Mammary epithelial cell (primary cell): ENCODE measurements at regions of chr14 and their contacts with region 1.

Region 1: GRCh38 chr14:92846162-92846897 is 52.2 kb downstream of the GOLGA5 start:
- DNase-seq: peak; percentile 84
- H3K4me3 ChIP-seq: no peak overlapping the region
- H3K27ac ChIP-seq: no peak overlapping the region
- H3K4me1 ChIP-seq: peaks cover 6% of the 10 kb centered on the region
- H3K27me3 ChIP-seq: no peaks in the 10 kb centered on the region
- CTCF ChIP-seq: no peak

Region 2: DNA sequence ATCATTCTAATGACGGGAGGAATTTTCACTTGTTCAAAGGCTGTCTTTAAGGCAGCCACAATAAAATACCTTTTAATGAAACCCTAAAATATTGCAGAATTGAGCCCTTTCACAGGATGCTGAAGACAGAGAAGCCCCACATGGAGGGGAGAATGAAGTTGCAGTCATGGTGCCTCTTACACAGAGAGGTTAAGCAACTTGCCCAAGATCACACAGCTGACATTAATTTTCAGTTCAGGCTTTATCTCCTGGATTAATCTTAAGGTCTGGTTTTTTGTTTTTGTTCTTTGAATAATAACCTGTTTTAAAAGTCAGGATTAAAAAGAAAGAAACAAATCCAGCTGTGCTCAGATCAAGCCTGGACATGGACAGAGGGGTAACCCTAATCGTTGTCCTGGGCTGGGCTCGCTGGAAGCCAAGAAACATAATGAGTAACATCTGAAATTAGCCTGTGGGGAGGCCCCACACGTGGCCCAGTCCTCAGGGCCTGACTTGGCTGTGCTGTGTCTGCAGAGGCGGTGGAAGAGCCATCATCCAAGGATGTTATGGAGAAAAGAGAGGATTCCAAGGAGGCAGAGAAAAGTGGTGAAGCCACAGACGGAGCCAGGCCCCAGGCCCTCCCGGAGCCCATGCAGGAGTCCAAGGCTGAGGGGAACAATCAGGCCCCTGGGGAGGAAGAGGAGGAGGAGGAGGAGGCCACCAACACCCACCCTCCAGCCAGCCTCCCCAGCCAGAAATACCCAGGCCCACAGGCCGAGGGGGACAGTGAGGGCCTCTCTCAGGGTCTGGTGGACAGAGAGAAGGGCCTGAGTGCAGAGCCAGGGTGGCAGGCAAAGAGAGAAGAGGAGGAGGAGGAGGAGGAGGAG is 84.6 kb after region 1 on chr14:
- CTCF ChIA-PET with region 1: no interaction called
- dilution Hi-C with region 1: loop called (anchors 5 kb)
- in situ Hi-C with region 1: no loop called
- intact Hi-C with region 1: no loop called
- DNase-seq: peak; percentile 75
- H3K4me3 ChIP-seq: no peak overlapping the region
- H3K27ac ChIP-seq: no peak overlapping the region
- H3K4me1 ChIP-seq: peaks cover 33% of the 10 kb centered on the region
- H3K27me3 ChIP-seq: no peaks in the 10 kb centered on the region
- CTCF ChIP-seq: no peak

Region 3: DNA sequence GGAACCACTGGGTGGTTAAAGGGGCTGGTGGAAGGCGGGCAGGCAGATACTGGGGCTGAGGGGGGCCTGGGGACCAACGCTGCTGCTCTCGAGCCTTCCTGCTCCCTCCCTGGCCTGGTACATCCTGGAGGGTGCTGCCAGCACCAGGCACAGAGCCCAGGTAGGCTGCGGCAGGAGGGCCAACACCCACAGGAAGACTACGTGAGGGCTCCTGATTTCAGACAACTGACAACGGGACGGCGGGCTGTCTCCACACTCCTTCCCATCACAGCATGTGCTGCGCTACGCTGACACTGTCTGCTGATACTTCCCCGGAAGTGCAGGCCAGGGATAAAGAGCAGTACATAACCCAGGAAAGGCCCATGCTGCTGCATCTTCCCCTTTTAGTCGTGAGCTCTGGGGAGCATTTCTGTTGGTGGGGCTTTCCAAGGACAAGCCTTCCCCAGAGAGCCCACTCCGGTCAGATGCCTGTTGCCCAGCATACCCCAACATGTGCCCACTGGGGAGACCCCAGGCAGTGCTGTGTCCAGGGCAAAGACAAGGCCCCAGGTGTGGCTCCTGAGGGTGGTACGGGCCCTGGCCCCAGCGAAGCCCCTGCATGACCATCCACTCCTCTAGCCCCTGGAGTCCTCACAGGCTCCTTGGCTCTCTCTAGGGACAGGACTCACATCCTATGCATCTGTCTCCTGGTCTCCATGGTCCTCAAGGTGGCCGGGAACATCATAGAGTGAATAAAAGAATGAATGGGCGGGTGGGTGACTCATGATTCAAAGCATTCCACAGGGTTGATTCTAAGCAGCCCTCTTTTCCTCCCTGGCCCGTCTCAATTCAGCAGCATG is 114.6 kb after region 1 on chr14:
- CTCF ChIA-PET with region 1: no interaction called
- dilution Hi-C with region 1: loop called (anchors 10 kb)
- in situ Hi-C with region 1: no loop called
- intact Hi-C with region 1: no loop called
- DNase-seq: peak; percentile 34
- H3K4me3 ChIP-seq: no peak overlapping the region
- H3K27ac ChIP-seq: peak overlapping the region; percentile 3
- H3K4me1 ChIP-seq: peaks cover 11% of the 10 kb centered on the region
- H3K27me3 ChIP-seq: no peaks in the 10 kb centered on the region
- CTCF ChIP-seq: no peak

Region 4: GRCh38 chr14:93778453-93778852 is 932.1 kb after region 1 on chr14:
- CTCF ChIA-PET with region 1: no interaction called
- dilution Hi-C with region 1: no loop called
- in situ Hi-C with region 1: no loop called
- intact Hi-C with region 1: no loop called
- DNase-seq: no peak
- H3K4me3 ChIP-seq: no peak overlapping the region
- H3K27ac ChIP-seq: no peak overlapping the region
- H3K4me1 ChIP-seq: no peaks in the 10 kb centered on the region
- H3K27me3 ChIP-seq: no peaks in the 10 kb centered on the region
- CTCF ChIP-seq: no peak